Panc1 (cell line): ENCODE measurements at regions of chr20 and their contacts with region 1.

Region 1: DNA sequence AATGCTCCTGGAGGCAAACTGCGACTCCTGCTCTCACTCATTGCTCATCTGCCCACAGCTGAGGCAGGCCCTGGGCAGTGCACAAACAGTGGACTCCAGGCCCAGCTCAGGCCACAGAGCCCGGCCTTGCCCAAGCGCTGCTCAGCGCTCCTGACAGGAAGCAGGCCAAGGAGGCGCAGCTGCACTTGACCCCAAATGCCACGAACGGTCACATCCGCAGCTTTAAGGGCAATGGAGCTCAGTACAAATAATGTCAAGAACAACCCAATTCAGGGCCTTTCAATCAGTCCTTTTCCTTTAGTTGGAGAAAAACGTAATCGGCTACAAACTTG is 33.8 kb downstream of the RRBP1 start:
- DNase-seq: no peak
- ATAC-seq: no peak
- H3K4me3 ChIP-seq: no peak overlapping the region
- H3K27ac ChIP-seq: peak overlapping the region; percentile 75; the same call in 1 of the 2 replicates
- H3K4me1 ChIP-seq: peaks cover 79% of the 10 kb centered on the region
- H3K27me3 ChIP-seq: no peaks in the 10 kb centered on the region
- CTCF ChIP-seq: no peak

Region 2: GRCh38 chr20:16573001-16573965 is 1075.0 kb before region 1 on chr20 and contains the start of gene KIF16B:
- CTCF ChIA-PET with region 1: no interaction called
- POLR2A ChIA-PET with region 1: interaction called, 11 read pairs
- in situ Hi-C with region 1: no loop called
- intact Hi-C with region 1: no loop called
- DNase-seq: peak; percentile 82
- ATAC-seq: peak; percentile 88
- H3K4me3 ChIP-seq: peak within 1 kb of the TSS; percentile 81 to 95
- H3K27ac ChIP-seq: peak within 1 kb of the TSS; percentile 99
- H3K4me1 ChIP-seq: peaks cover 20% of the 10 kb centered on the region
- H3K27me3 ChIP-seq: no peaks in the 10 kb centered on the region
- CTCF ChIP-seq: no peak
- total RNA-seq, gene KIF16B: 16.6 TPM

Region 3: DNA sequence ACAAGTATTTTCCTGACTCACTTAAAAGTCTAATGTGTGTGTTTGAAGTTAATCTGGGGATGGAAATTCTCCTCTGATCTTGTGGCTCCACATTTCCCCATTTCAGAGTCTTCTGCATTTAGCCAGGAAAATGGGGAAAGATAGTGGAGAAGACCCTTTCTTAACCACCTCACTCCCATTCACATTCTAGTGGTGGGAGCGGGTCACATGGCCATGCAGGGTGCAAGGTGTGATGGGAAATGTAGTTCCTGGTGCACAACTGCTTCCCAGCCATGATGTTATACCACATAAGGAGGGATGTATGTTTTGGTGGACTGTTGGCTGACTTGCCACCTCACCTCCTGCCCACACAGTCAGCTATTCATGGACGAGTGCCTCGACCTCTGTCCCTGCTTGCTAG is 113.3 kb after region 1 on chr20:
- CTCF ChIA-PET with region 1: no interaction called
- POLR2A ChIA-PET with region 1: no interaction called
- in situ Hi-C with region 1: no loop called
- intact Hi-C with region 1: no loop called
- DNase-seq: no peak
- ATAC-seq: no peak
- H3K4me3 ChIP-seq: no peak overlapping the region
- H3K27ac ChIP-seq: no peak overlapping the region
- H3K4me1 ChIP-seq: no peaks in the 10 kb centered on the region
- H3K27me3 ChIP-seq: no peaks in the 10 kb centered on the region
- CTCF ChIP-seq: no peak